ENCODE measurements at regions of chrX and their contacts with region 1.

Region 1: GRCh38 chrX:49191033-49191871 is 5.1 kb upstream of the PRICKLE3 start:
- DNase-seq: peak; percentile 79 to 97
- H3K4me3 ChIP-seq: peak overlapping the region; percentile 55 to 69 (median 64)
- H3K27ac ChIP-seq: peak overlapping the region; percentile 77 to 85
- H3K4me1 ChIP-seq: no peaks in the 10 kb centered on the region
- H3K27me3 ChIP-seq: peaks cover 0 to 8% of the 10 kb centered on the region in 2 donors
- CTCF ChIP-seq: no peak
- POLR2A ChIP-seq: no peak

Region 2: GRCh38 chrX:49269768-49270248 is 78.6 kb after region 1 on chrX and contains the start of gene PPP1R3F:
- intact Hi-C with region 1: loop called (anchors 2 kb)
- DNase-seq: no peak
- H3K4me3 ChIP-seq: peak within 1 kb of the TSS; percentile 61 to 84 (median 71)
- H3K27ac ChIP-seq: peak within 1 kb of the TSS; percentile 92 to 97
- H3K4me1 ChIP-seq: no peaks in the 10 kb centered on the region
- H3K27me3 ChIP-seq: peaks cover 0 to 19% of the 10 kb centered on the region in 2 donors
- CTCF ChIP-seq: no peak
- POLR2A ChIP-seq: no peak
- total RNA-seq, gene PPP1R3F: 5.9 to 7.9 (median 7.2) TPM

Measured in breast epithelium (tissue), 4 donors.